Natural killer cell (primary cell): ENCODE measurements at regions of chr7 and their contacts with region 1.

Region 1: GRCh38 chr7:73522105-73522872 is at the start of gene BAZ1B:
- DNase-seq: peak; percentile 95 to 97
- ATAC-seq: peak; percentile 94 to 99 (median 94)
- H3K4me3 ChIP-seq: peak within 1 kb of the TSS; percentile 57
- H3K4me3 Mint-ChIP-seq: peak within 1 kb of the TSS; percentile 97
- H3K27ac ChIP-seq: peak within 1 kb of the TSS; percentile 88
- H3K27ac Mint-ChIP-seq: peak within 1 kb of the TSS; percentile 99
- H3K4me1 ChIP-seq: peaks cover 53% of the 10 kb centered on the region
- H3K4me1 Mint-ChIP-seq: peaks cover 66% of the 10 kb centered on the region in 2 donors
- H3K27me3 ChIP-seq: no peaks in the 10 kb centered on the region
- H3K27me3 Mint-ChIP-seq: no peaks in the 10 kb centered on the region
- CTCF ChIP-seq: no peak
- total RNA-seq, gene BAZ1B: 50.1 to 61.9 (median 59.9) TPM

Region 2: DNA sequence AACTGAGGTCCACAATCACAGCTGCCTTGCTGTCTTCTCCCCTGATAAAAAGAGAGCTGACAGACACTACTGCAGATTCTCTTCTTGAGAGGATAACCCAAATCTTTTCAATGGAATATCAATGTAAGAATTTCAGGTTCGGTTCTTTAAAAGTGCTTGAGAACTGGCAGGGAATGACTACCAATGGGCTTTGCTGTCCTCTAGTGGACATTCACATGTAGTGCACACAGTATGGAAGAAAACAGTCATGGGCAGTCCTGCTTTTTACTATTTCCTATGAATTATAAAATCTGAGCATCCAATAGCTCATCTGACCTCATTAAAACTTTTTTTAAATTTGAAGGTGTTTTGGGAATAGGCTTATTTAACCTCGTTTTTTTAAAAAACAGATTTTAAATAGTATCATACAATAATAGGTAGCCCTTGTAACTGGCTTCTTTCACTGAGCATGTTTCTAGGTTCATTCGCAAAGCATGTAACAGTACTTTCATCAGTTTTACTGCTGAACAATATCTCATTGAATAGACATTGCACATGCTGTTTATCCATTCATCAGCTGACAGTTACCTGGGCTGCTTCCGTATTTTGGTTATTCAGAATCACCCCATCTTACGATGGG is 70.4 kb before region 1 on chr7:
- intact Hi-C with region 1: no loop called
- DNase-seq: peak in 1 of 2 donors; percentile 82
- ATAC-seq: peak; percentile 87 to 97 (median 90)
- H3K4me3 ChIP-seq: no peak overlapping the region
- H3K4me3 Mint-ChIP-seq: no peak overlapping the region
- H3K27ac ChIP-seq: no peak overlapping the region
- H3K27ac Mint-ChIP-seq: no peak overlapping the region
- H3K4me1 ChIP-seq: no peaks in the 10 kb centered on the region
- H3K4me1 Mint-ChIP-seq: peaks cover 8 to 11% of the 10 kb centered on the region in 2 donors
- H3K27me3 ChIP-seq: no peaks in the 10 kb centered on the region
- H3K27me3 Mint-ChIP-seq: no peaks in the 10 kb centered on the region
- CTCF ChIP-seq: peak; percentile 99

Region 3: DNA sequence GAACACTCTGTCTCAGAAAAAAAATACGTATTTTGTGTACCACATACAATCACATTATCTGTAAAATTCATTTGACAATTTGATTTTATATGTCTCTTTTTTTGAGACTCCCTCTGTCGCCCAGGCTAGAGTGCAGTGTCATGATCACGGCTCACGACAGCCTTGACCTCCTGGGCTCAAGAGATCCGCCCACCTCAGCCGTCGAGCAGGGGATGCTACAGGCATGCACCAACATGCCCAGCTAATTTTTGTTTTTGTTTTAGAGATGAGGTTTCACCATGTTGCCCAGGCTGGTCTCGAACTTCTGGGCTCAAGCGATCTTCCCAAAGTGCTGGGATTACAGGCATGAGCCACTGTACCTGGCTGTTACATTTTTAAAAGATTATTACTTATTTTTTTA is 11.5 kb after region 1 on chr7:
- intact Hi-C with region 1: no loop called
- DNase-seq: no peak
- ATAC-seq: no peak
- H3K4me3 ChIP-seq: no peak overlapping the region
- H3K4me3 Mint-ChIP-seq: no peak overlapping the region
- H3K27ac ChIP-seq: no peak overlapping the region
- H3K27ac Mint-ChIP-seq: no peak overlapping the region
- H3K4me1 ChIP-seq: no peaks in the 10 kb centered on the region
- H3K4me1 Mint-ChIP-seq: no peaks in the 10 kb centered on the region
- H3K27me3 ChIP-seq: no peaks in the 10 kb centered on the region
- H3K27me3 Mint-ChIP-seq: no peaks in the 10 kb centered on the region
- CTCF ChIP-seq: no peak

Region 4: DNA sequence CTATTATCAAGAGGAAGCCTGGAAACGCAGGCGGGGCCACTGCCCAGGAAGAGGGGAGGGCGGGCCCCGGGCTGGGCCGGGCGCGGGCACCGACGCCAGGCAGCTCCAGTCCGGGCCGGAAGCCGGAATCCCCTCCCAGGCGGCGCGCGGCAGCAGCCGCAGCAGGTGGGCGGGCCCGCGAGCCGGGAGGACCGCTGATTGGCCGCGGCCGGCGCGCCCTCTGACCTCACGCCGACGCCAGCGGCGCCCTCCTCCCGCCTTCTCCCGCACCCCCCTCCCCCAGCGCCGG is 34.8 kb after region 1 on chr7:
- intact Hi-C with region 1: loop called (anchors 1 kb)
- DNase-seq: peak; percentile 90 to 96
- ATAC-seq: peak; percentile 86 to 96 (median 89)
- H3K4me3 ChIP-seq: peak overlapping the region; percentile 74
- H3K4me3 Mint-ChIP-seq: peak overlapping the region; percentile 93
- H3K27ac ChIP-seq: peak overlapping the region; percentile 99
- H3K27ac Mint-ChIP-seq: peak overlapping the region; percentile 94 to 96
- H3K4me1 ChIP-seq: peaks cover 26% of the 10 kb centered on the region
- H3K4me1 Mint-ChIP-seq: peaks cover 34 to 42% of the 10 kb centered on the region in 2 donors
- H3K27me3 ChIP-seq: no peaks in the 10 kb centered on the region
- H3K27me3 Mint-ChIP-seq: peaks cover 0 to 2% of the 10 kb centered on the region in 2 donors
- CTCF ChIP-seq: no peak

Region 5: DNA sequence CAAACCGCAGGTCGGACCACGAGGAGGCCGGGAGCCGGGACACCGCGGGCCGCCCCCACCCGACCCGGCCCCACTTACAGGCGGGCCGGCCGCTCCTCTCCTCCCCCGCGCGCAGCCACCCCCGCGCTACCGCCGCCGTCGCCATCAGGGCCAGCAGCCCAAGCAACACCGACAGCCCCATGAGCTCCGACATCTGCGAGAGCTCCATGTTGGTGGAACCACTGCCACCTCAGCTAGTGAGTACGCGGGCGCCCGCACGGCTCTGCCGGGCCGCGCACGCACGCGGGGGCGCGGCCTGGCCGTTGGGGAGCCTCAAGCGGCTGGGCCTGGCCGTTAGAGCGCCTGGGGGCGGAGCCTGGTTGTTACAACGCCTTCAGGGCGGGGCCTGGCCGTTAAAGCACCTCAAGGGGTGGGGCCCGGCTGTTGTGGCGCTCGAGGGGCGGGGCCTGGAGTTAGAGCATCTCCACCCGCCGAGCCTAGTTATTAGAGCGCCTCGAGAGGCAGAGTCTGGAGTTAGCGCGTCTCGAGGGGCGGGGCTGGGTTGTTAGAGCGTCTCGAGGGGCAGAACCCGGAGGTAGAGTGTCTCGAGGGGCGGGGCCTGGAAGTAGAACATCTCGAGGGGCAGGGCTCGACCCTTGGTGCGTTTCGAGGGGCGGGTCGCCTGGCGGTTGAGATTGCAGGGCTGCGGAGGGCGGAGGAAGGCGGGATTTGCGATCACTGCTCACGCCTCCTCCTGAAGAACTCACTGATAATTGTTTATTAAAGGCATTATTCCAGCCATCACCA is 56.2 kb after region 1 on chr7 and contains the start of gene TBL2:
- intact Hi-C with region 1: loop called (anchors 1 kb)
- DNase-seq: peak; percentile 99
- ATAC-seq: peak; percentile 87 to 96 (median 89)
- H3K4me3 ChIP-seq: peak within 1 kb of the TSS; percentile 92
- H3K4me3 Mint-ChIP-seq: peak within 1 kb of the TSS; percentile 100
- H3K27ac ChIP-seq: peak within 1 kb of the TSS; percentile 74
- H3K27ac Mint-ChIP-seq: peak within 1 kb of the TSS; percentile 96 to 100
- H3K4me1 ChIP-seq: peaks cover 19% of the 10 kb centered on the region
- H3K4me1 Mint-ChIP-seq: peaks cover 11 to 31% of the 10 kb centered on the region in 2 donors
- H3K27me3 ChIP-seq: no peaks in the 10 kb centered on the region
- H3K27me3 Mint-ChIP-seq: no peaks in the 10 kb centered on the region
- CTCF ChIP-seq: no peak
- total RNA-seq, gene TBL2: 15.1 to 18.5 (median 17.6) TPM

Region 6: DNA sequence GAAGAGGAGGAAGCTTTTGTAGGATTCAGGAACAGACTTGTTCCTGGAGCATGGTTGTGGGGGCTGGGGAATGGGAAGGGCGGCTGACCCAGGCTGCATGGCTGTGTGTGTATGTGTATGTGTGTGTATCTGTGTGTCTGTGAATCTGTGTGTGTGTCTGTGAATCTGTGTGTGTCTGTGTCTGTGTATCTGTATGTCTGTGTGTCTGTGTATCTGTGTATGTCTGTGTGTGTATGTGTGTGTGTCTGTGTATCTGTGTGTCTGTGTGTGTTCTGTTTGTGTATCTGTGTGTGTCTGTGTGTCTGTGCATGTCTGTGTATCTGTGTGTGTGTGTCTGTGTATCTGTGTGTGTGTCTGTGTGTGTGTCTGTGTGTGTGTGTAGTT is 203.8 kb after region 1 on chr7:
- intact Hi-C with region 1: loop called (anchors 5 kb)
- DNase-seq: no peak
- ATAC-seq: peak; percentile 10 to 18 (median 17)
- H3K4me3 ChIP-seq: no peak overlapping the region
- H3K4me3 Mint-ChIP-seq: no peak overlapping the region
- H3K27ac ChIP-seq: no peak overlapping the region
- H3K27ac Mint-ChIP-seq: no peak overlapping the region
- H3K4me1 ChIP-seq: no peaks in the 10 kb centered on the region
- H3K4me1 Mint-ChIP-seq: no peaks in the 10 kb centered on the region
- H3K27me3 ChIP-seq: peaks cover 5% of the 10 kb centered on the region
- H3K27me3 Mint-ChIP-seq: peaks cover 11 to 12% of the 10 kb centered on the region in 2 donors
- CTCF ChIP-seq: peak; percentile 3